Activated CD4-positive, alpha-beta T cell treated with anti-CD3 and anti-CD28 coated beads, Interleukin-2, amount 10 ng/mL, durations not matched to agents 24 days and 14 days (primary cell): ENCODE measurements at regions of chr14 and their contacts with region 1.

Region 1: DNA sequence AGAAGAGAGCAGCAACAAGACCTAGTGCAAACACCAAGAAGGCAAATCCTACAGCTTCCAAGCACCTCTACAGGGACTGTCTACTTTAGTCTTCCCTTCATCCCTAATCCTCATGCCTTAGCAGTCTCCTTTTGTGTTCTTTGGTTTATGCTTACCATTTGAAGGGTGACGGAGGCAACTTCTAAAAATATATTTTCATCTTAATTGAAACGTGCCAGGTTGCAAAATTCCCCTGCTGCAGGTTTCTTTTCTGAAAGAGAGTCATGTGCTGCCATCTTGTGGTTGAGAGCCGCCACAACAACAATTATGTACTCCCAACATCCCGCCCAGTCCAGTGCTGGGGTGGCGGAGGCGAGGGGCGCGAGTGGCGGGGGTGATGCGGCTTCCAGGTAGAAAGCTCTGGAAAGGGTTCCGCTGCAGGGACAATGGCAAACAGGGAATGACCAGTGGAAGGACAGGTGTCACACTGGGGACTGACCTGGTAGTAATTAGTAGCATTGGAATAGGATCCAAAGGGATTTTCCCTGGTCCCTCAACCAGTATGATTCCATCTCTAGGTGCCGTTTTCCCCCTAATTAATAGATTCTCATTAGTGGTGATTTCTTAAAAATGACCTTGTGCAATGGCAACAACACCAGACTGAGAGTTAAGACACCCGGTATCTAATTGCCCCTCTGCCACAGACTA is 80.3 kb upstream of the GNG2 start:
- DNase-seq: peak; percentile 91
- H3K4me3 Mint-ChIP-seq: peak overlapping the region; percentile 30
- H3K27ac Mint-ChIP-seq: no peak overlapping the region
- H3K4me1 Mint-ChIP-seq: peaks cover 12% of the 10 kb centered on the region
- H3K27me3 Mint-ChIP-seq: peaks cover 40% of the 10 kb centered on the region

Region 2: DNA sequence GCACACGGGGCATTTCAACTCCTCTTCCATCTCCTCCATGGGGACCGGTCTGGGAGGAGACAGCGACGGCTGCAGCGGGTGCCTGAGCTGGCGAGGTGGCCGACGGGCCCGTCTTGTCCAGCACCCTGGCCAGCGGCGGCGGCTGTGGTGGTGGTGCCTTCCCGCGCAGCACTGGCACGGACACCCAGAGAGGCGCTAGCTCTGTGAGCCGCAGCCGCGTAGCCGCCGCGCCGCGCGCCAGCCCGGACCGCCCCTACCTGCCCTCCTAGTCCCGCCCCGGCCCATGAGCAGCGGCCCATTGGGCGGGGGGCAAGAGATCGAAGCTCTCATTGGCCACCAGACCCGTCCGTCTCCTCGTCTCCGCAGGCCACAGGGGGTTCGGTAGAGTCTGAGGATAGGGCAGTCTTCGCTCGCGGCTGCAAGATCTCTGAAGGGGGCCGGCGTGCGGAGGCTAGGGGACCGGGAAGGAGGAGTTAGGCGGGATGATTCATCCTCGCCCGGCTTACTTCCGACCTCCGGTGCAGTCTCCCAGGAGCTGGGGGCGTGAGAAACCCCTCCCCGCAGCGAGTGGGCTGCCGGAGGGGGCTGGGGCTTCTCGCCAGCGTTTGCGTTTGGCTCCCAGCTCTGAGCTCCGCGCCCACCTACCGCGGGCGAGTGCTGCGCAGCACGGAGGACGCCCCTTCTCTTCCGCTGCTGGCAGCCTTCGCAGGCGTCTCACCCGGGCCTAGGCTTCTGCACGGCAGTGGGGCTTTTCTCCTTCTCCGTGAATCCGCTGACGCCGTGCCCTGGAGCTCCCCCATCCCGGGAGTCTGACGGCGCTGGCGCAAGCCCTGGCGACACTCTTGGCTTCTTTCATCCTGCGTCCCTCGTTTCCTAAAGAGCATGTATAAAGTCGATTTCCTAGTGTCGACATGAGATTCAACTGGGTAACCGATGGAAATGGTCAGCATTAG is 685.0 kb before region 1 on chr14 and contains the start of gene TRIM9:
- intact Hi-C with region 1: loop called (anchors 10 kb)
- DNase-seq: peak; percentile 97
- H3K4me3 Mint-ChIP-seq: peak within 1 kb of the TSS; percentile 91
- H3K27ac Mint-ChIP-seq: peak within 1 kb of the TSS; percentile 51
- H3K4me1 Mint-ChIP-seq: peaks cover 15% of the 10 kb centered on the region
- H3K27me3 Mint-ChIP-seq: peaks cover 55% of the 10 kb centered on the region
- total RNA-seq, gene TRIM9: 0.47 and 0.52 TPM in 2 replicates

Region 3: DNA sequence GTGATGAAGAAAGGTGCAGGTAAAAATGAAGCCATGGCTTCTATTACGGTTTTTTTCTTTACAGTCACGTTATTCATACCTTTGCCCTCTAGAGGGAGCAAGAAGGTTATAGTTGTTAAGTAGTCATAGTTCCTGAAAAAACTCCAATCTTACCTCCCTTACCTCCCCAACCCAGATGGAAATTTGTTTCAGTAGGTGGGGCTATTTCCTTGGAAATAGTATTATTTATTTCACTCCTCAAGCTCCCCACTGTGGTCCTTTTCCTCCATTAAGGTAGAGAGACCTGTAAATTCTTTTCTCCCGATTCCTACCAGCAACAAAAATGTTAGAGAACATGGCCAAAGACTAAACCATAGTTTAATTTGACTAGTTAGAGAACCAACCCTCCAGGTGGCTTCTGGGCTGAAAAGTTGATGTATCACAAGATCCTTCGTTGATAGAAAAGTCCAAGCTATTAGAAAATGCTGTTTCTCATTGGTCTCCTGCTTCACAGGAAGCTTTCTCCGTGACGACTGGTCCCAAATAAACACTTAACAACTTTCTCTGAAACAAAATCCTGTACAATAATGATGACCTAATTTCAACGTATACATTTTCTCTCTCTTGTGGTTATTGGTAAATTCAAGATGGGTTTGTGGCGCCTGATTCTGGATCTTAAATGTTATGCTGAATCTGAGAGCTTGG is 496.6 kb before region 1 on chr14:
- intact Hi-C with region 1: loop called (anchors 1 kb)
- DNase-seq: no peak
- H3K4me3 Mint-ChIP-seq: no peak overlapping the region
- H3K27ac Mint-ChIP-seq: no peak overlapping the region
- H3K4me1 Mint-ChIP-seq: no peaks in the 10 kb centered on the region
- H3K27me3 Mint-ChIP-seq: no peaks in the 10 kb centered on the region

Region 4: DNA sequence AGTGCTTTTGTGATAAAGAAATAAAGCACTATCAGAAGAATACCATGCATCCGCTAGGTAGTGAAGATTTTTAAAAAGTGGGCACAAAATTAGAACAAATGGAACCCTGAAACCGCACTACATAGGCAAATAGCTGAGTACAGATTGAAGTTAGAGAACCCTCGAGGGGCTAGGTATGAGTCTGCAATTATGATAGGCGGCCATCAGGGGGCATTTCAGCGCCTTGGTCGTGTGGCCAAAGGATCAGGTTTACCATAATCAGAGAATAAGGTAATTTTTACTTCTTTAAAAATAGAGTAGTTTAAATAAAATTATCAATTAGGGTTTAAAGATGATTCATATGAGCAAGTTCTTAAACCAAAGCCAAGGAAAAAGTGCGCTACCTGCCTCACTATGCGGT is 410.3 kb before region 1 on chr14:
- intact Hi-C with region 1: loop called (anchors 1 kb)
- DNase-seq: peak; percentile 62
- H3K4me3 Mint-ChIP-seq: no peak overlapping the region
- H3K27ac Mint-ChIP-seq: no peak overlapping the region
- H3K4me1 Mint-ChIP-seq: no peaks in the 10 kb centered on the region
- H3K27me3 Mint-ChIP-seq: peaks cover 13% of the 10 kb centered on the region

Region 5: GRCh38 chr14:51744372-51745130 is 35.6 kb before region 1 on chr14:
- intact Hi-C with region 1: loop called (anchors 5 kb)
- DNase-seq: peak; percentile 79
- H3K4me3 Mint-ChIP-seq: no peak overlapping the region
- H3K27ac Mint-ChIP-seq: peak overlapping the region; percentile 48
- H3K4me1 Mint-ChIP-seq: no peaks in the 10 kb centered on the region
- H3K27me3 Mint-ChIP-seq: no peaks in the 10 kb centered on the region

Region 6: DNA sequence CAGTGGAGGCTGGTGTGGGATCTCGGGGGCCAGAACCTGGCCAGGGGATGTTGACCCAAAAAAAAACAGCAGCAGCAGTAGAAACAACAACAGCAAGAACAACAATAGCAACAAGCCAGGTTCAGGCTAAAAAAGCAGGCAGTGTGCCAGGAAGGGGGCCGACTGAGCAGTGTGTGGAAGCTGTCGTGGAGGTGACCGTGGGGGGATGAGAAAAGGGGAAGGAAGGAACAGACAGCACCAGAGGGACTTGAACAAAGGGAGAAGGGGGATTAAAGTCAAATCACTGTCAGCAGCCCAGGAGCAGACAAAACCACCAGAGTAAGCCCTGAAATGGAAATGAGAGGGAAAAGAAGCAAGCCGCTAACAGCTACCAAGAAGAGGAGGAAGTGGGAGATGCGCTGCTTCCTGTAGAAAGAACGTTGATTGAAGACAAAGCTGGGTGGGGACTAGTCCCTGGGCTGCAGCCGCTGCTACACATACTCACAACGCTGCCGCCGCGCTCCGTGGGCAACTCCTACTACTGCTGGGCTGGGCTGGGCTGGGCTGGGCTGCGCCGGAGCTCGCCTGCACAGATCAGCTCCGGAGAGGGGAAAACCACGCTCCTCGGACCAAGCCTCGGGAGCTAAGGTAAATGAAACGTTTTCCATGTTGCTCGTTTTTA is 80.1 kb after region 1 on chr14 and contains the start of gene GNG2:
- intact Hi-C with region 1: loop called (anchors 5 kb)
- DNase-seq: peak; percentile 95
- H3K4me3 Mint-ChIP-seq: peak within 1 kb of the TSS; percentile 99
- H3K27ac Mint-ChIP-seq: peak within 1 kb of the TSS; percentile 92
- H3K4me1 Mint-ChIP-seq: peaks cover 51% of the 10 kb centered on the region
- H3K27me3 Mint-ChIP-seq: no peaks in the 10 kb centered on the region
- total RNA-seq, gene GNG2: 104 and 105 TPM in 2 replicates

Region 7: GRCh38 chr14:51979088-51979709 is 199.1 kb after region 1 on chr14:
- intact Hi-C with region 1: loop called (anchors 2 kb)
- DNase-seq: peak; percentile 95
- H3K4me3 Mint-ChIP-seq: no peak overlapping the region
- H3K27ac Mint-ChIP-seq: no peak overlapping the region
- H3K4me1 Mint-ChIP-seq: peaks cover 23% of the 10 kb centered on the region
- H3K27me3 Mint-ChIP-seq: no peaks in the 10 kb centered on the region